Esophagus squamous epithelium (tissue), 5 donors: ENCODE measurements at regions of chr10 and their contacts with region 1.

Region 1: GRCh38 chr10:3043512-3044368 is 23.6 kb upstream of the PFKP start:
- DNase-seq: no peak
- H3K4me3 ChIP-seq: no peak overlapping the region
- H3K27ac ChIP-seq: peak overlapping the region in 2 of 4 donors; percentile 24 to 50
- H3K4me1 ChIP-seq: peaks cover 7 to 42% (median 20%) of the 10 kb centered on the region in 3 donors
- H3K27me3 ChIP-seq: peaks cover 0 to 4% (median 0%) of the 10 kb centered on the region in 4 donors
- CTCF ChIP-seq: peak; percentile 14 to 78 (median 64)
- POLR2A ChIP-seq: no peak

Region 2: DNA sequence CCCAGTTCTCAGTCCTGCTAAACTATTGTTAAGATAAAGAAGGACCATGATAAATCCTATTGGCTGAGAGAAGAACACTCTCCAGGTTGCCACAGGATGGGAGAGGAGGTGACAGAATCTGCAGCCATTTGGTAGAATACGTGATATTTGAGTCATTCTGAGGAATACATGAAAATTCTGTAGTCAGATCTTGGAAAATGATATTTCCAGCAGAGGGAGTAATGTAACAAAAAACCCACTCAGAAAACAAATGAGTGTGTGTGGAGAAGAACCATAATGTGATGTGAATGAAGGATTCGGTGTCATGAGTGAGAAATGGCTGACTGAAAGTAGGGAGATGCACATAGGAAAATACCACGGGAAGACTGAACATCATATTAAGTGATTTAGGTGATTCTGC is 104.9 kb before region 1 on chr10:
- intact Hi-C with region 1: loop called (anchors 10 kb)
- DNase-seq: no peak
- H3K4me3 ChIP-seq: no peak overlapping the region
- H3K27ac ChIP-seq: no peak overlapping the region
- H3K4me1 ChIP-seq: no peaks in the 10 kb centered on the region
- H3K27me3 ChIP-seq: peaks cover 0 to 79% (median 0%) of the 10 kb centered on the region in 4 donors
- CTCF ChIP-seq: no peak
- POLR2A ChIP-seq: no peak

Region 3: DNA sequence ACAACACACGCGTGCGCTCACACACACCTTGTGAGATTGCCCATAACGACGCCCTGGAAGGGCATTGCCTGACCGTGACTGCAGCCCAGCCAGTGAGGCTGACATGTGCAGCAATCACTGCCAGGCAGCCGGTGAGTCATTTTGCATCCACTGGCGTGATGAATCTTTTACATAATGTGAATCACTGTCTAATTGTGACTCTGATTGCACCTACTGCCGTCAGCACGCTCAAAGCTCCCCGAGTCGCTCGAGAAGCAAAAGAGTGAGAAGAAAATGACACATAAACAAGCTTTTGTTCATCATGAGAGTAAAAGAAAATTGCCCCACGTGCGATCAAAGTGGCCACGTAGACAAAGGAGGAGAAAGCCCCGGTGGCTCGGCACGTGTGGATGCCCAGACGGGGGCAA is 93.8 kb before region 1 on chr10:
- intact Hi-C with region 1: no loop called
- DNase-seq: no peak
- H3K4me3 ChIP-seq: no peak overlapping the region
- H3K27ac ChIP-seq: no peak overlapping the region
- H3K4me1 ChIP-seq: no peaks in the 10 kb centered on the region
- H3K27me3 ChIP-seq: peaks cover 0 to 31% (median 0%) of the 10 kb centered on the region in 4 donors
- CTCF ChIP-seq: no peak
- POLR2A ChIP-seq: no peak